Endothelial cell of umbilical vein (primary cell): ENCODE measurements at regions of chr6 and their contacts with region 1.

Region 1: DNA sequence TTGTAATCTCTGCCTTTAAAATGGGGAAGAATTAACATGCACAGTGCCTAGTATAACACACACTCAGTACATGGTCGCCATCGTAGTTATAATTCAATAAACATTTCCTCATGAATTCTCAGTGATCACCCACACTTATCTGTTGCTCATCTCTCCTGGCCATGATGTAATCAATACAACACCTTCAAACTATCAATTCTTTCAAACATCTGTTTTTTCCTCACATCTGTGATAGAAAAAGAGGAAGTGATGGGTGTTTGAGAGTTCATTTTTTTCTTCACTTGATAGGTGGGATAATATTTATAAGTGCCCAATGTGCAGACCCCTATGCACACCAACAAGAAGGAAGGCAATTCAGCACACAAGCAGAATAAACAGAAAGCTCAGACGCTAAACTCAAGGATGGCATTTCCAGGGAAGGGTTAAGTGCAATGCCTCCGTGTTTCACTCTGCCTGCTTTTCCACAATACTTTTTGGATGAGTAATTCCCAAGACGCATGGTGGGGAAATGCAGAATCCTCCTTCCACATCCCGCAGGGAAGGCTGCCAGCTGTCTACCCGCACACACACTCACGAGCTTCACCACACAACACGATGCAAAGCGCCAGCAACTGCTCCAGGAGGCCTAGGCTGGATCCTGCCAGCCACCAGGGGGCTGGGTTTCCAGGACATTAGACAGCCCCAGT is 100.3 kb downstream of the GMPR start:
- DNase-seq: peak; percentile 98
- H3K4me3 ChIP-seq: no peak overlapping the region
- H3K27ac ChIP-seq: peak overlapping the region; percentile 79
- H3K4me1 ChIP-seq: peaks cover 33% of the 10 kb centered on the region
- H3K27me3 ChIP-seq: no peaks in the 10 kb centered on the region
- CTCF ChIP-seq: peak; percentile 81 to 84
- POLR2A ChIP-seq: peak; percentile 29

Region 2: GRCh38 chr6:16216501-16217155 is 122.1 kb before region 1 on chr6:
- CTCF ChIA-PET with region 1: no interaction called
- POLR2A ChIA-PET with region 1: no interaction called
- dilution Hi-C with region 1: no loop called
- intact Hi-C with region 1: loop called (anchors 5 kb)
- DNase-seq: peak; percentile 41
- H3K4me3 ChIP-seq: no peak overlapping the region
- H3K27ac ChIP-seq: peak overlapping the region; percentile 99
- H3K4me1 ChIP-seq: peaks cover 28% of the 10 kb centered on the region
- H3K27me3 ChIP-seq: no peaks in the 10 kb centered on the region
- CTCF ChIP-seq: no peak
- POLR2A ChIP-seq: no peak

Region 3: GRCh38 chr6:16305246-16305725 is 33.4 kb before region 1 on chr6:
- CTCF ChIA-PET with region 1: no interaction called
- POLR2A ChIA-PET with region 1: no interaction called
- dilution Hi-C with region 1: no loop called
- intact Hi-C with region 1: no loop called
- DNase-seq: no peak
- H3K4me3 ChIP-seq: no peak overlapping the region
- H3K27ac ChIP-seq: no peak overlapping the region
- H3K4me1 ChIP-seq: peaks cover 6% of the 10 kb centered on the region
- H3K27me3 ChIP-seq: no peaks in the 10 kb centered on the region
- CTCF ChIP-seq: no peak
- POLR2A ChIP-seq: no peak

Region 4: GRCh38 chr6:16319813-16320532 is 18.7 kb before region 1 on chr6:
- CTCF ChIA-PET with region 1: interaction called, 36 read pairs
- POLR2A ChIA-PET with region 1: no interaction called
- dilution Hi-C with region 1: no loop called
- intact Hi-C with region 1: loop called (anchors 2 kb)
- DNase-seq: peak; percentile 95
- H3K4me3 ChIP-seq: peak overlapping the region in 1 of 3 experiments; percentile 43
- H3K27ac ChIP-seq: peak overlapping the region; percentile 87
- H3K4me1 ChIP-seq: peaks cover 15% of the 10 kb centered on the region
- H3K27me3 ChIP-seq: no peaks in the 10 kb centered on the region
- CTCF ChIP-seq: no peak
- POLR2A ChIP-seq: no peak

Region 5: GRCh38 chr6:16355699-16356446 is 17.2 kb after region 1 on chr6:
- CTCF ChIA-PET with region 1: interaction called, 11 read pairs
- POLR2A ChIA-PET with region 1: no interaction called
- dilution Hi-C with region 1: no loop called
- intact Hi-C with region 1: loop called (anchors 1 kb)
- DNase-seq: peak; percentile 40
- H3K4me3 ChIP-seq: no peak overlapping the region
- H3K27ac ChIP-seq: no peak overlapping the region
- H3K4me1 ChIP-seq: peaks cover 24% of the 10 kb centered on the region
- H3K27me3 ChIP-seq: no peaks in the 10 kb centered on the region
- CTCF ChIP-seq: no peak
- POLR2A ChIP-seq: no peak

Region 6: GRCh38 chr6:16409531-16410441 is 71.1 kb after region 1 on chr6:
- CTCF ChIA-PET with region 1: interaction called, 92 read pairs
- POLR2A ChIA-PET with region 1: no interaction called
- dilution Hi-C with region 1: no loop called
- intact Hi-C with region 1: loop called (anchors 1 kb)
- DNase-seq: peak; percentile 67
- H3K4me3 ChIP-seq: no peak overlapping the region
- H3K27ac ChIP-seq: no peak overlapping the region
- H3K4me1 ChIP-seq: no peaks in the 10 kb centered on the region
- H3K27me3 ChIP-seq: no peaks in the 10 kb centered on the region
- CTCF ChIP-seq: peak; percentile 87 to 89
- POLR2A ChIP-seq: no peak